Astrocyte of the cerebellum (primary cell): ENCODE measurements at regions of chr19 and their contacts with region 1.

Region 1: DNA sequence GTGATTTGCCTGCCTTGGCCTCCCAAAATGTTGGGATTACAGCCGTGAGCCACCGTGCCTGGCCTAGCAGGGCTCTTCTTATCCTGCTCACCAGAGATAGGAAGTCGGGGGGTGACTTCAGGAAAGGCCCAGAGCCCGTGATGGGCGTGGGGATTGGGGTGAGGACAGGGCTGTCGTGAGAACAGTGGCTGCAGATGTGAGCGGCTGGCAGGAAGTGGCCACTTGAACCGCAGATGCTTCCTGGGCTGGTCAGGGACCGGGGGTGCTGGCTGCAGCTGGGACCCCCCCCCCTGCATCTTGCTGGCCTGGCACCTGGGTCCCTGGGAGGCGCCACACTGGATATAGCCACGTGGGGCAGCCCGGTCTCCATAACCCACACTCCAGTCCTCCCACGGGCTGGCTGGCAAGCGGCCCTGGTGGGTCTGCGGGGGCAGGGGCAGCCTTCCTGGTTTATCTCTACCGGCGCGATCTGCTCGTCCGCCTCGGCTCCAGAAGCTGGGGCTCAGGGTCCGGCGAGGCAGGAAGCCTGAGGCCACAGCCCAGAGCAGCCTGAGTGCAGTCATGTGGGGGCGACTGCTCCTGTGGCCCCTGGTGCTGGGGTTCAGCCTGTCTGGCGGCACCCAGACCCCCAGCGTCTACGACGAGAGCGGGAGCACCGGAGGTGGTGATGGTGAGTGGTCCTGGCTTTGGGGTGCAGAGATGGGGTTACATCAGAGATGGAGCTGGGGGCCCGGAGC is at the start of gene F2RL3:
- DNase-seq: no peak
- H3K4me3 ChIP-seq: no peak within 1 kb of the TSS
- CTCF ChIP-seq: no peak

Region 2: GRCh38 chr19:16829010-16829821 is 59.6 kb before region 1 on chr19 and contains the start of gene SIN3B:
- in situ Hi-C with region 1: no loop called
- DNase-seq: peak; percentile 63
- H3K4me3 ChIP-seq: peak within 1 kb of the TSS; percentile 95
- CTCF ChIP-seq: no peak

Region 3: GRCh38 chr19:17035842-17036424 is 147.1 kb after region 1 on chr19:
- in situ Hi-C with region 1: loop called (anchors 10 kb)
- DNase-seq: no peak
- H3K4me3 ChIP-seq: no peak overlapping the region
- CTCF ChIP-seq: no peak